HCT116 (cell line): ENCODE measurements at regions of chr6 and their contacts with region 1.

Region 1: GRCh38 chr6:28580475-28580874 is 54.8 kb downstream of the GPX5 start:
- DNase-seq: no peak
- ATAC-seq: no peak
- H3K4me3 ChIP-seq: no peak overlapping the region
- H3K27ac ChIP-seq: no peak overlapping the region
- H3K4me1 ChIP-seq: no peaks in the 10 kb centered on the region
- H3K27me3 ChIP-seq: no peaks in the 10 kb centered on the region
- CTCF ChIP-seq: peak; percentile 2 to 35 (median 31); a peak in 3 of 6 replicates
- POLR2A ChIP-seq: no peak
- RAD21 ChIP-seq: peak; percentile 54

Region 2: DNA sequence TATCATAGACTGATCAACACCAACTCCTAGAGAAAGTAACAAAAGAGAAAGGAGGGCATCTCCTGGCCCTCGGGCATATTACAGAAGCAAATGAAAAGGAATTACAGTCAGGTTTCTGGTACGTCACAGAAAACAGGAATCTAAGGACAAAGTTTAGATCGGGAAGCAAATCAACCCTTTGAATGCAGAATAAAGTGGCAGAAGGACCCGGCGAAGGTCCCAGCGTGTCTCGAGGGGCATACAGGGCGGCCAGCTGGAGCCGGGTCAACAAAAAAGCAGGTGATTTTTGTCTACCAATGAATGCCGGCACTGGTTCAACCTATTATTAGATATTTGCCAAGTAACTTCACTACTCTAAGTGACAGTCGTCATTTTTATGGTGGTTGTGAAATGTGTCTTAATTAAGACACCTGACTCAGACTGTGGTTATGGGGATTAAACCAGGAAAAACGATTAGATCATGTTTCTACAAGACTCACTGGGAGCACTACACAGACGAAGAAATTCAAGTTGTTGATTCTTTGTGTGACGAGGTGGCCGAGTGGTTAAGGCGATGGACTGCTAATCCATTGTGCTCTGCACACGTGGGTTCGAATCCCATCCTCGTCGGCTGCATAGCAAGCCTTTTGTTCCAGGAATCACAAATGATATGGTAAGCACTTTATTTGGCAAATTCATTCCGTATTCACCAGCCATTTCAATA is 367.8 kb before region 1 on chr6:
- CTCF ChIA-PET with region 1: no interaction called
- POLR2A ChIA-PET with region 1: no interaction called
- RAD21 ChIA-PET with region 1: no interaction called
- intact Hi-C with region 1: no loop called
- DNase-seq: peak; percentile 80
- ATAC-seq: peak; percentile 88
- H3K4me3 ChIP-seq: peak overlapping the region; percentile 47 to 53
- H3K27ac ChIP-seq: peak overlapping the region; percentile 38
- H3K4me1 ChIP-seq: peaks cover 5 to 15% of the 10 kb centered on the region in 2 experiments; a peak in 3 of 4 replicates
- H3K27me3 ChIP-seq: no peaks in the 10 kb centered on the region
- CTCF ChIP-seq: peak in 2 of 3 experiments; percentile 19 to 38; a peak in 2 of 6 replicates
- POLR2A ChIP-seq: no peak
- RAD21 ChIP-seq: peak; percentile 62

Region 3: GRCh38 chr6:28496099-28496779 is 84.2 kb before region 1 on chr6:
- CTCF ChIA-PET with region 1: interaction called, 12 read pairs
- POLR2A ChIA-PET with region 1: no interaction called
- RAD21 ChIA-PET with region 1: interaction called in 1 of 2 experiments, 4 read pairs
- intact Hi-C with region 1: loop called (anchors 5 kb)
- DNase-seq: peak; percentile 8
- ATAC-seq: peak; percentile 70
- H3K4me3 ChIP-seq: no peak overlapping the region
- H3K27ac ChIP-seq: no peak overlapping the region
- H3K4me1 ChIP-seq: no peaks in the 10 kb centered on the region; a peak in 1 of 4 replicates
- H3K27me3 ChIP-seq: no peaks in the 10 kb centered on the region
- CTCF ChIP-seq: peak; percentile 6 to 67 (median 39); a peak in 4 of 6 replicates
- POLR2A ChIP-seq: no peak
- RAD21 ChIP-seq: peak; percentile 85